Esophagus muscularis mucosa (tissue), 4 donors: ENCODE measurements at regions of chr9 and their contacts with region 1.

Region 1: GRCh38 chr9:4762108-4762885 is 21.3 kb upstream of the AK3 start:
- DNase-seq: peak; percentile 92
- H3K4me3 ChIP-seq: peak overlapping the region in 3 of 4 donors; percentile 7 to 31 (median 29)
- H3K27ac ChIP-seq: peak overlapping the region in 1 of 4 donors; percentile 36
- H3K4me1 ChIP-seq: peaks cover 7 to 17% (median 12%) of the 10 kb centered on the region in 4 donors
- H3K27me3 ChIP-seq: peaks cover 0 to 15% (median 0%) of the 10 kb centered on the region in 4 donors
- CTCF ChIP-seq: peak; percentile 75 to 78 (median 77)
- EP300 ChIP-seq: no peak
- POLR2A ChIP-seq: no peak

Region 2: DNA sequence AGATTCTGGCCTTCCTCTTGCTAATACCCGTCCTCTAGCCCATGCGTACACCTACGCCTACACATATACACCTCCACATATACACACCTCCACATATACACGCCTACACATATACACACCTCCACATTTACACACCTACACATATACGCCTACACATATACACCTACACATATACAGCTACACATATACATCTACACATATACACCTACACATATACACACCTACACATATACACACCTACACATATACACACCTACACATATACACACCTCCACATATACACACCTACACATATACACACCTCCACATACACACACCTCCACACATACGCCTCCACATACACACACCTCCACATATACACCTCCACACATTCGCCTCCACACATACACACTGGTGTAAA is 48.4 kb before region 1 on chr9:
- intact Hi-C with region 1: no loop called
- DNase-seq: no peak
- H3K4me3 ChIP-seq: no peak overlapping the region
- H3K27ac ChIP-seq: no peak overlapping the region
- H3K4me1 ChIP-seq: peaks cover 0 to 10% (median 5%) of the 10 kb centered on the region in 4 donors
- H3K27me3 ChIP-seq: no peaks in the 10 kb centered on the region
- CTCF ChIP-seq: no peak
- EP300 ChIP-seq: no peak
- POLR2A ChIP-seq: no peak

Region 3: GRCh38 chr9:4792572-4793458 is 30.5 kb after region 1 on chr9 and contains the start of gene RCL1:
- intact Hi-C with region 1: loop called (anchors 5 kb)
- DNase-seq: peak; percentile 97
- H3K4me3 ChIP-seq: peak within 1 kb of the TSS; percentile 71 to 77 (median 73)
- H3K27ac ChIP-seq: peak within 1 kb of the TSS; percentile 73 to 85 (median 78)
- H3K4me1 ChIP-seq: peaks cover 13 to 31% (median 25%) of the 10 kb centered on the region in 4 donors
- H3K27me3 ChIP-seq: no peaks in the 10 kb centered on the region
- CTCF ChIP-seq: no peak
- EP300 ChIP-seq: no peak
- POLR2A ChIP-seq: peak; percentile 56
- total RNA-seq, gene RCL1: 13.4 to 19.1 (median 14.9) TPM

Region 4: GRCh38 chr9:4828761-4829160 is 66.5 kb after region 1 on chr9:
- intact Hi-C with region 1: no loop called
- DNase-seq: no peak
- H3K4me3 ChIP-seq: no peak overlapping the region
- H3K27ac ChIP-seq: no peak overlapping the region
- H3K4me1 ChIP-seq: peaks cover 4 to 38% (median 21%) of the 10 kb centered on the region in 4 donors
- H3K27me3 ChIP-seq: no peaks in the 10 kb centered on the region
- CTCF ChIP-seq: no peak
- EP300 ChIP-seq: no peak
- POLR2A ChIP-seq: no peak

Region 5: GRCh38 chr9:4923580-4924544 is 161.6 kb after region 1 on chr9:
- intact Hi-C with region 1: loop called (anchors 10 kb)
- DNase-seq: no peak
- H3K4me3 ChIP-seq: no peak overlapping the region
- H3K27ac ChIP-seq: no peak overlapping the region
- H3K4me1 ChIP-seq: no peaks in the 10 kb centered on the region
- H3K27me3 ChIP-seq: no peaks in the 10 kb centered on the region
- CTCF ChIP-seq: peak in 2 of 3 experiments; percentile 14 to 23
- EP300 ChIP-seq: no peak
- POLR2A ChIP-seq: no peak

Region 6: GRCh38 chr9:4984621-4985385 is 222.5 kb after region 1 on chr9 and contains the start of gene JAK2:
- intact Hi-C with region 1: loop called (anchors 2 kb)
- DNase-seq: peak; percentile 97
- H3K4me3 ChIP-seq: peak within 1 kb of the TSS; percentile 80 to 90 (median 86)
- H3K27ac ChIP-seq: peak within 1 kb of the TSS; percentile 96 to 99 (median 98)
- H3K4me1 ChIP-seq: peaks cover 24 to 48% (median 45%) of the 10 kb centered on the region in 4 donors
- H3K27me3 ChIP-seq: no peaks in the 10 kb centered on the region
- CTCF ChIP-seq: peak; percentile 34 to 56 (median 35)
- EP300 ChIP-seq: no peak
- POLR2A ChIP-seq: peak; percentile 57
- total RNA-seq, gene JAK2: 27.0 to 47.8 (median 35.1) TPM

Region 7: DNA sequence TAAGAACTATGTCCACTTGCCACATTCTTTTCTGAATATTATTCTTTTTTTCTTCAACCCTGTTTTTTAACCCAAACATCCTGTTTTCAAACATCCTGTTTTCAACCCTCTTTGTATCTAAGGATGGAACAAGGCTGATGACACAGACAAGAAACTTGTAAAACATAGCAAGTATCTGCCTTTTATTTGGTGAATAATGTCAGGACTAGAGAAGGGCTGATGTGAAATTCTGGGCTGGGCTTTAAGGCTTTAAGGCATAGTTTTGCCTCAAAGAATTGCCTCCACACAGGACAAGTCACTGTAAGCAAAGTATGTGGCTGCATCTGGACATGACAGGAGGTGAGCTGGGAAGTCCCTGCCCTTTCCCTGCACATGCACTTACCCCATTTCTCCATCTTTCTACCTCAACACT is 824.1 kb after region 1 on chr9:
- intact Hi-C with region 1: loop called (anchors 5 kb)
- DNase-seq: peak; percentile 24
- H3K4me3 ChIP-seq: no peak overlapping the region
- H3K27ac ChIP-seq: no peak overlapping the region
- H3K4me1 ChIP-seq: peaks cover 7 to 17% (median 8%) of the 10 kb centered on the region in 4 donors
- H3K27me3 ChIP-seq: no peaks in the 10 kb centered on the region
- CTCF ChIP-seq: no peak
- EP300 ChIP-seq: no peak
- POLR2A ChIP-seq: no peak